Activated CD4-positive, alpha-beta memory T cell treated with anti-CD3 and anti-CD28 coated beads for 36 hours (primary cell): ENCODE measurements at regions of chr12 and their contacts with region 1.

Region 1: GRCh38 chr12:50400598-50401364 is at the start of gene LARP4:
- DNase-seq: peak; percentile 95
- H3K4me3 Mint-ChIP-seq: peak within 1 kb of the TSS; percentile 91
- H3K27ac Mint-ChIP-seq: peak within 1 kb of the TSS; percentile 95
- H3K4me1 Mint-ChIP-seq: peaks cover 23% of the 10 kb centered on the region
- H3K27me3 Mint-ChIP-seq: no peaks in the 10 kb centered on the region
- total RNA-seq, gene LARP4: 62.2 to 64.0 TPM

Region 2: DNA sequence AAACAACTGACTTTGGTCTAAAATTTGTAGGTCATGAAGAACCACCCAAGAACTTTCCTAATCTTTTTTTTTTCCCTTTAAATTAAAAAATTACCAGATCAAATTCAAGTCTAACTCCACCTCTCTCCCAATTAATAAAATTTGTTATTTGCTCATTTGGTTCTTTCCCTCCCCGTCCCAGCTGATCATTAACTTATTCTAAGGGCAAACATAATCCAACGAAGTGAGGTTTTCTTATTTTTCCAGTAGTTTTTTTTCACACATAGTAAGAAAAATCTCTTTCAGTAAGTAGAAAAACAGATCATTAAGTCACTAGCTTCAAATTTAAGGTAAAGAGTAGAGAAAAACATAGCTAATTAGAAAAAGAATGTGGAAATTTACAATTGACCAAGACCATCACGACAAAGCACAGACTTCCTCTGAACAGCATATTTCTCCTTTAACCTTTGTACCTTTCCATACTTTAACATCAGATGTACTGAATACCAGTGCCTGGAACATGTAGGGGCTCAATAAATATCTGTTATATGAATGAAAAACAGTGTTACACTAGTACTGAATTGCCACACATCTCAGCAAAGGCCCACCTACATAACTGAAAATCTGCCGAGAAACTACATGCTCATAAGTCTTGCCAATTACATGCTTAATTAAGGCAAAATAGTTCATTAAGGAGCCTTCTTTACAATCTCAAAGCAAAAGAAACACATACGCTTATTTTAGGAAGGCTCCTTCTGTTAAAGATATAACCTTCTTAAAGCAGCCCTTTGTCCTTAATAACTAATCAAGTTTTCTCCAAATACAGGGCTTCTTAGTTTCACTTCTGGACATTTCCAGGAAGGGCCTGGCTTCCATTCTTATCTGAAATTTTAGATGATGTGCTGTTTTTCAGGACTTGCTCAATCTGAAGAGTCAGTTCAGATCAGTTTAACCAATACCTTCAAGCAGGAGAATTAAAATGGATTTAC is 129.2 kb before region 1 on chr12:
- CTCF ChIA-PET with region 1: no interaction called
- POLR2A ChIA-PET with region 1: no interaction called
- intact Hi-C with region 1: no loop called
- DNase-seq: no peak
- H3K4me3 Mint-ChIP-seq: no peak overlapping the region
- H3K27ac Mint-ChIP-seq: no peak overlapping the region
- H3K4me1 Mint-ChIP-seq: peaks cover 4% of the 10 kb centered on the region
- H3K27me3 Mint-ChIP-seq: no peaks in the 10 kb centered on the region

Region 3: DNA sequence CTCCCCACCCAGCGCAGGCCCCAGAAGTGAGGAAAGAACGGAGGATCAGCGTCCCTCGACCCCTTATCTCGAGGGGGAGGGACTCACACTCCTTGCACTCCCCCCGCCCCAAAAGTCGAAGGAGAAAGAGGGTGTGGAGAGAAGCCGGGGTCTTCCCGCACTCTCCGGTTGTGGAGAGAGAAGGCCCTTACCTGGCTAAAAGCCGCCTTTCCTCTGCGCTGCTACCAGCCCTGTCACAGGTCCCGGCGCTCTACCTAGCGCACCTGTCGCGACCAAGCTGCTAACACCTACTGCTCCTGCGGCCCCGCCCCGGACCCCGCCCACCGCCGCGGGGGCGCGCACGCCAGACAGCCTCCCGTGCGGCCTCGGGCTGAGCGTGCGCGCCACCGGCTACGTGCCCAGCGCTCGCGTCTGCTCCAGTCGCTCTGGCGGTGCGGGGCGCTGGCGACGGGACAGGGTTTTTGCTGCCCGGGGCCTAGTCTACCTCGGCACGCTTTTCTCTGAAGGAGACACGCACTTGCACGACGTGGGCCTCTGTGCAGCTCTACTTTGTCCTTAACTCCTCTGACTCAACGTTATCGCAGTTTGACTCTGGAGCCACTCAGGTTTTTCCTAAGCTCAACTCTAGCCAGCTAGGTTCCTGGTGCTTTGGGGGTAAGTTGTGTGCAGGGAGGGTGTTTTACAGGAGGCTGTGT is 117.4 kb before region 1 on chr12 and contains the start of gene LIMA1:
- CTCF ChIA-PET with region 1: no interaction called
- POLR2A ChIA-PET with region 1: no interaction called
- intact Hi-C with region 1: loop called (anchors 1 kb)
- DNase-seq: peak; percentile 94
- H3K4me3 Mint-ChIP-seq: peak within 1 kb of the TSS; percentile 89
- H3K27ac Mint-ChIP-seq: peak within 1 kb of the TSS; percentile 62
- H3K4me1 Mint-ChIP-seq: peaks cover 25% of the 10 kb centered on the region
- H3K27me3 Mint-ChIP-seq: no peaks in the 10 kb centered on the region
- total RNA-seq, gene LIMA1: 115 to 117 TPM

Region 4: GRCh38 chr12:50442178-50442908 is 41.6 kb after region 1 on chr12:
- CTCF ChIA-PET with region 1: no interaction called
- POLR2A ChIA-PET with region 1: no interaction called
- intact Hi-C with region 1: loop called (anchors 5 kb)
- DNase-seq: no peak
- H3K4me3 Mint-ChIP-seq: no peak overlapping the region
- H3K27ac Mint-ChIP-seq: peak overlapping the region; percentile 85
- H3K4me1 Mint-ChIP-seq: peaks cover 15% of the 10 kb centered on the region
- H3K27me3 Mint-ChIP-seq: no peaks in the 10 kb centered on the region